ENCODE measurements at regions of chr10 and their contacts with region 1.

Region 1: GRCh38 chr10:71270301-71271220 is 48.5 kb upstream of the SLC29A3 start:
- DNase-seq: peak; percentile 72
- H3K4me3 ChIP-seq: no peak overlapping the region; a peak in 1 of 4 replicates
- H3K27ac ChIP-seq: peak overlapping the region; percentile 68 to 96; a peak in 3 of 4 replicates
- H3K4me1 ChIP-seq: peaks cover 54 to 90% of the 10 kb centered on the region in 2 experiments
- H3K27me3 ChIP-seq: no peaks in the 10 kb centered on the region
- CTCF ChIP-seq: peak; percentile 65
- EP300 ChIP-seq: no peak
- RAD21 ChIP-seq: peak; percentile 77

Region 2: GRCh38 chr10:70403483-70404035 is 867.0 kb before region 1 on chr10:
- CTCF ChIA-PET with region 1: no interaction called
- POLR2A ChIA-PET with region 1: no interaction called
- DNase-seq: no peak
- H3K4me3 ChIP-seq: peak overlapping the region; percentile 91 to 93
- H3K27ac ChIP-seq: peak overlapping the region; percentile 35 to 74; a peak in 3 of 4 replicates
- H3K4me1 ChIP-seq: peaks cover 10 to 18% of the 10 kb centered on the region in 2 experiments
- H3K27me3 ChIP-seq: no peaks in the 10 kb centered on the region
- CTCF ChIP-seq: no peak
- EP300 ChIP-seq: no peak
- RAD21 ChIP-seq: no peak

Region 3: DNA sequence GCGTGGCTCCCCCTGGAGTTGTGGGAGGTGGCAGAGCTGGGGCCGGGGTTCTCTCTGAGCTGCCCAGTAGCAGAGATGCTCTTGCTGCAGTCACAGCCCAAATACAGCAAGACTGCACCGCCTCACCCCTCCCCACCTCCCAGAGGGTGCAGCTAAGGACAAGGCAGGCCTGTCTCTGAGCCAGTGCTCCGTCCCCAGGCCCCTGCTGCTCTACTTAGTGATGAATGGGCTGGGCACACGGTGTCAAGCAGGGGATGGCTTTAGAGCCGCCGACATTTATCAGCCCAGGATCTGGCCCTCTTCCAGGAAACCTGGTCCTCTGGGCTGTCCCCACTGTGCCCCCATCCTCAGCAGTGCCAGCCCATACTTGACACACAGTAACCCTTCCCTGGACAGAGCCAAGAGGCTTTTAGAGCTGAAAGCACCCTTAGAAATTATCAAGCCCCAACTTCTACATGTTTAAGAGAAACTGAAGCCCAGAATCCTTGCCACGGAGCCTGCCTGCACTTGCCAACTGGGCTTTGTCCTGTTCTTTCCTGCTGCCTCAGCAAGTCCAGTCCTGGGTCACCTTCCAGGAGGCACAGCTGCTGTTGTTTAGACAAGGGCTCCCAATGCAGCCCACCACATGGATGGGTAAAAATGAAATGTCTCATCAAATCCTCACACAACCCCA is 195.3 kb before region 1 on chr10:
- CTCF ChIA-PET with region 1: interaction called, 11 read pairs
- POLR2A ChIA-PET with region 1: no interaction called
- DNase-seq: peak; percentile 86
- H3K4me3 ChIP-seq: no peak overlapping the region
- H3K27ac ChIP-seq: peak overlapping the region in 1 of 2 experiments; percentile 56; a peak in 2 of 4 replicates
- H3K4me1 ChIP-seq: peaks cover 0 to 49% of the 10 kb centered on the region in 2 experiments; a peak in 1 of 4 replicates
- H3K27me3 ChIP-seq: 0 out of 2 replicates have a peak, but pooled peaks cover 5% of the 10 kb centered on the region
- CTCF ChIP-seq: no peak
- EP300 ChIP-seq: peak in 1 of 2 experiments; percentile 72; a peak in 2 of 4 replicates
- RAD21 ChIP-seq: no peak

Region 4: GRCh38 chr10:71094712-71095390 is 175.7 kb before region 1 on chr10:
- CTCF ChIA-PET with region 1: no interaction called
- POLR2A ChIA-PET with region 1: no interaction called
- DNase-seq: no peak
- H3K4me3 ChIP-seq: no peak overlapping the region
- H3K27ac ChIP-seq: no peak overlapping the region
- H3K4me1 ChIP-seq: peaks cover 0 to 3% of the 10 kb centered on the region in 2 experiments; a peak in 1 of 4 replicates
- H3K27me3 ChIP-seq: peaks cover 10% of the 10 kb centered on the region; the same call in 1 of the 2 replicates
- CTCF ChIP-seq: no peak
- EP300 ChIP-seq: no peak
- RAD21 ChIP-seq: no peak

Region 5: DNA sequence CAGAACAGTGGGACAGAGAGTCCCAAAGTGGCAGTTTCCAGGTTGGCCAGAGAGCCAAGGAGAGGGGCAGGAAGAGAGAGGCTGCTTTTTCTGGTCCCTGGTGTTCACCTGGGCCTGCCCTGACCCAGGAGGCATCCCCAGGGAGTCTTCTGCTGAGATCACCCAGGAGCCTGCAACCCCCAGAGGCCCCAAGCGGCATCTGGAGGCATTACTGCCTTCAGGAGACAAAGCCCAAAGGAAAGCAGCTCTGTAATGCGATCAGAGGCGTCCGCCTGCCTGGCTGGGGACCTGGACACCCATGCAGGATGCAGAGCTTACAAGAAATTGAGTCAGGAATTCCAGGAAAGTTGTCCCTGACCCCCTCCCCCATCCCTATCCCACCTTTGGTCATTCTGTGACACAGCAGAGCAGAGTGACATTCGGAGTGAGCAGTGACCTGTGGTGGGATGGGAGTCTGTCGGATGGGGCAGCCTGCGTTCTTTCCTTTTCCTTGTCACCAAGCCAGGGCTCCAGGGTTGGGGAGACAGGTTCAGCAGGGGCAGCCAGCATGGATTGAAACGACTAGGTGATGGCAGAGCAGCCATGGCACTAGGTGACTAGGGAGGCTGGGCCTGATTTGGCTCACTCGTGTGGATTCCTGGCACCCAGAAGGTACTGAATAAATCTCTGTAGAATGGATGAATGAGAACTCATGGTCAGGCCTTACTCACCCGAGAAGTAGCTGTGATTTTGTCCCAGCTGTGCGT is 47.8 kb before region 1 on chr10:
- CTCF ChIA-PET with region 1: interaction called, 107 read pairs
- POLR2A ChIA-PET with region 1: interaction called, 7 read pairs
- DNase-seq: no peak
- H3K4me3 ChIP-seq: no peak overlapping the region; a peak in 1 of 4 replicates
- H3K27ac ChIP-seq: peak overlapping the region; percentile 29 to 98
- H3K4me1 ChIP-seq: peaks cover 44 to 75% of the 10 kb centered on the region in 2 experiments
- H3K27me3 ChIP-seq: no peaks in the 10 kb centered on the region
- CTCF ChIP-seq: peak; percentile 27; the same call in 1 of the 2 replicates
- EP300 ChIP-seq: 0 out of 4 replicates have a peak, but pooled peaks of 1 of the 2 experiments have one; percentile 24
- RAD21 ChIP-seq: no peak

Region 6: DNA sequence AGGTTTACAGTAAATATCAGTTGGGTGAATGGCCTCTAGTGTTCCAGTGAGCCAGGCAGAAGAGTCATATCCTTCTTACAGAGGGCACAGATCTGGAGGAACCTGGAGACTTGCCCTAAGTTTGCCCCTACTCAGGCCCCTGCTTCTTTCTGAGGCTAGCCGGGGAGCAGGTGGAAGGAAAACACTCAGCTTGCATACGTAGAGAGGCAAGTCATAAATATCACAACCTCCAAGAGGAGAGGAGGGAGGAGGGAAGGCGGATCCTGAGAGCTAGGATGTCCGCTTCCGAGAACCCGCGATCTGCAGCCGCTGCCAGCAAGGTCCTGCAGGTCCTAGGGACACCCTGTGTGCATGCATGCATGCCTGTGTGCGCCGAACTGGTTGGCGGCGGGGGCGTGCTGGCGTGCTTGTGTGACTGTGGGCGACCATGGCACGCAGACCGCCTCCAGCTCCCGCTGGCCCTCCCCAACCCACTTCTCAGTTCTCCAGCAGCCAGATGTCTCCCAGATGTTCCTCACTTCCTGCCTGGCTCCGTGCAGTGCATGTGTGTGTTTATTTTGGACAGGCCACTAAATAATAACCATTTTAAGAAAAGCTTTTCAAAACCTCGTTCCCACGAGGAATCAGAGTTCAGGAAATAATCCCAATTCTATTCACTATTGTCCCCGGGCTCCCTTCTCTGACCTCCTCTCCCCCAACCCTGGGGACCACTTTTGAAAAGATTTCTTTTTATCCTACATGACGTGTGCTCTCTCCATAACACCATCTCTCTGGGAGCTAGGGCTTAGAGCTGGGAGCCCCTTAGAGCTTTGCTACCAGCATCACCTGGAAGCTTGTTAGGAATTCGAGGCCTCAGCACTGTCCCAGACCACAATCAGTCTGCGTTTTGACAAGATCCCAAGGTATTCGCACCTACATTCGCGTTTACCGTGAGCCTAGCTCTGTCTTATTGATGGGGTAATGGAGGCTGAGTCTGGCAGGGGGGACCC is 25.8 kb before region 1 on chr10:
- CTCF ChIA-PET with region 1: interaction called, 139 read pairs
- POLR2A ChIA-PET with region 1: interaction called, 7 read pairs
- DNase-seq: peak; percentile 81
- H3K4me3 ChIP-seq: no peak overlapping the region; a peak in 2 of 4 replicates
- H3K27ac ChIP-seq: peak overlapping the region; percentile 60 to 100; a peak in 3 of 4 replicates
- H3K4me1 ChIP-seq: peaks cover 60 to 99% of the 10 kb centered on the region in 2 experiments
- H3K27me3 ChIP-seq: no peaks in the 10 kb centered on the region
- CTCF ChIP-seq: no peak
- EP300 ChIP-seq: peak; percentile 7 to 50; a peak in 2 of 4 replicates
- RAD21 ChIP-seq: no peak; the same call in 1 of the 2 replicates

Region 7: GRCh38 chr10:71285180-71285545 is 14.6 kb after region 1 on chr10:
- CTCF ChIA-PET with region 1: interaction called, 104 read pairs
- POLR2A ChIA-PET with region 1: no interaction called
- DNase-seq: peak; percentile 85
- H3K4me3 ChIP-seq: no peak overlapping the region
- H3K27ac ChIP-seq: no peak overlapping the region; a peak in 1 of 4 replicates
- H3K4me1 ChIP-seq: peaks cover 0 to 22% of the 10 kb centered on the region in 2 experiments; a peak in 2 of 4 replicates
- H3K27me3 ChIP-seq: no peaks in the 10 kb centered on the region
- CTCF ChIP-seq: peak; percentile 76
- EP300 ChIP-seq: no peak
- RAD21 ChIP-seq: peak; percentile 83

Region 8: DNA sequence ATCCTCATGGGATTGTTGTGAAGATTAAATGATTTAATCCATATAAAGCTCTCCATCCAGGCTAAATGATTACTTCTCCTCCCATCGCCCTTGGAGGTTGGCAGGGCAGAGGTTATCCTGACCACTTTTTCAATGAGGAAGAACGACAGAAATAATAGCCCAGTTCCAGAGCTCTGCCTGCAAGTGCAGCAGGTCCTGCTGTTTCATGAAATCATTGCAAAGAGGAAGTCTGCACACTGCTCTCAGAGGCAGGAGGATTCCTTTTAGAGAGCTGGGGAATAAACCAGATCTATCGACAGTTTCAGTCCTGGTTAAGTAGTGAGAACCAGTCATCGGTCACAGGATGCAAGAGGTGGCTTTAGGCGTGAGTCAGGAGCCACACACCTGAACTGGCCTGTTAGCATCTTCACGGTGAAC is 101.2 kb after region 1 on chr10:
- CTCF ChIA-PET with region 1: no interaction called
- POLR2A ChIA-PET with region 1: no interaction called
- DNase-seq: no peak
- H3K4me3 ChIP-seq: no peak overlapping the region
- H3K27ac ChIP-seq: no peak overlapping the region
- H3K4me1 ChIP-seq: peaks cover 0 to under 1% of the 10 kb centered on the region in 2 experiments; a peak in 1 of 4 replicates
- H3K27me3 ChIP-seq: no peaks in the 10 kb centered on the region; the same call in 1 of the 2 replicates
- CTCF ChIP-seq: no peak
- EP300 ChIP-seq: no peak
- RAD21 ChIP-seq: no peak